WTC11 (cell line): ENCODE measurements at regions of chr17 and their contacts with region 1.

Region 1: GRCh38 chr17:61389670-61390478 is 9.8 kb upstream of the TBX2 start:
- DNase-seq: peak; percentile 83
- ATAC-seq: peak; percentile 88
- H3K4me3 Mint-ChIP-seq: no peak overlapping the region
- H3K27ac Mint-ChIP-seq: no peak overlapping the region
- H3K4me1 Mint-ChIP-seq: peaks cover 9% of the 10 kb centered on the region
- H3K27me3 Mint-ChIP-seq: peaks cover 36% of the 10 kb centered on the region
- CTCF ChIP-seq: peak; percentile 78

Region 2: DNA sequence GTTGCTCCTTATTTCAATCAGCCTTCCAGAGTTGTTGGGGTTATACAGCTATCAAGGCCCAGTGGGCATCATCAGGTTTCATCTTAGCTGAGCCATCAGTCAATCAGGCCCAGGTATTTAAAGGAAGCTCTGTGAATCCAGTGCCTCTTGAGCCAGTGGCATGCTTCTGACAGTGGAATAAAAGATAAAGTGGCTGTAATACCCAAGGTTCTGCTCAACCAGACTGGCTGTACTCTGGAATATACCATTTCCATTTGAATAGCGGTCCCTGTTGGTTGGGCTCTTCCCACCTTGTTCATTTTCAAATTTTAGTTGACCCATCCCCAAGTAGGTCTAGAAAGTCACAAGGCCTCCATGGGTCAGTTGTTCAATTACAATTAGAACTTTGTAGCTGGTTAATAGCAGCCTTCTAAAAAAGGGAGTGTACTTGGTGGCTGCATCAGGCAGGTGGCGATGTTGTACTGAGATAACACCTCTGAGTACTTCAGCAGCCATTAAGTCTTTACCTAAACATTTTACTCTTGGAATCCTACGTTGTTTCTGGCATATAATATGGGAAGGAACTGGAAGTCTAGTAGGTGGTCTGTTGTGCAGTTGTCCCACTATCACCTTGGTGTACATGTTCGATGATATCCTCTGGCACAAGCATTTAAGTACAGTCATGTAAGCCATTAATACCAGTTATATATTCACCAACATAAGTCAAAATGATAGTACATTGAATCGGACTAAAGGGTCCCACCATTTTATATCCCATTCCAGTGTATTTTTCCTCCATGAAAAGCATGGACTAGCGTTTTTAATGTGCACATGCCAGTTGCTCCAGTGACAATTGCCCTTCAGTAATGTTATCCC is 418.1 kb before region 1 on chr17:
- CTCF ChIA-PET with region 1: interaction called, 17 read pairs
- POLR2A ChIA-PET with region 1: no interaction called
- DNase-seq: peak; percentile 49
- ATAC-seq: peak; percentile 89
- H3K4me3 Mint-ChIP-seq: no peak overlapping the region
- H3K27ac Mint-ChIP-seq: no peak overlapping the region
- H3K4me1 Mint-ChIP-seq: peaks cover 6% of the 10 kb centered on the region
- H3K27me3 Mint-ChIP-seq: no peaks in the 10 kb centered on the region
- CTCF ChIP-seq: peak; percentile 54

Region 3: GRCh38 chr17:61314368-61315078 is 75.4 kb before region 1 on chr17:
- CTCF ChIA-PET with region 1: interaction called, 6 read pairs
- POLR2A ChIA-PET with region 1: interaction called, 13 read pairs
- DNase-seq: no peak
- ATAC-seq: no peak
- H3K4me3 Mint-ChIP-seq: no peak overlapping the region
- H3K27ac Mint-ChIP-seq: peak overlapping the region; percentile 2; the same call in 1 of the 2 replicates
- H3K4me1 Mint-ChIP-seq: peaks cover 14% of the 10 kb centered on the region
- H3K27me3 Mint-ChIP-seq: no peaks in the 10 kb centered on the region; the same call in 1 of the 2 replicates
- CTCF ChIP-seq: no peak

Region 4: DNA sequence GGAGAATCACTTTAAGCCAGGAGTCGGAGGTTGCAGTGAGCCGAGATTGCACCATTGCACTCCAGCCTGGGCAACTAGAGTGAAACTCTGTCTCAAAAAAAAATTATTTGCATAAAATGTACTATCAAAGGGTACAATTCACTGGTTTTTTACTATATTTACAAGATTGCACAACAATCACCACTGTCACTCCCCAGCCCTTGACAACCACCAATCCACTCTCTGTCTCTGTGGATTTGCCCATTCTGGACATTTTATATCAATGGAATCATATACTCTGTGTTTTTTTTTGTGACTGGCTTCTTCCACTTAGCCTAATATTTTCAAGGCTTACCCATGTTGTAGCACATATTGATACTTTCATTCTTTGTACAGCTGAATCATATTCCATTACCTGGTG is 28.6 kb after region 1 on chr17:
- CTCF ChIA-PET with region 1: no interaction called
- POLR2A ChIA-PET with region 1: no interaction called
- DNase-seq: no peak
- ATAC-seq: no peak
- H3K4me3 Mint-ChIP-seq: no peak overlapping the region
- H3K27ac Mint-ChIP-seq: no peak overlapping the region
- H3K4me1 Mint-ChIP-seq: peaks cover 6% of the 10 kb centered on the region
- H3K27me3 Mint-ChIP-seq: peaks cover 64% of the 10 kb centered on the region
- CTCF ChIP-seq: no peak